ENCODE measurements at regions of chr2 and their contacts with region 1.

Region 1: GRCh38 chr2:16678964-16679363 is 13.3 kb upstream of the CYRIA start:
- DNase-seq: no peak
- H3K4me3 Mint-ChIP-seq: no peak overlapping the region
- H3K27ac Mint-ChIP-seq: no peak overlapping the region
- H3K4me1 Mint-ChIP-seq: no peaks in the 10 kb centered on the region
- H3K27me3 Mint-ChIP-seq: peaks cover 16% of the 10 kb centered on the region

Region 2: GRCh38 chr2:16693854-16694253 is 14.9 kb after region 1 on chr2:
- CTCF ChIA-PET with region 1: interaction called, 3 read pairs
- intact Hi-C with region 1: loop called (anchors 1 kb)
- DNase-seq: no peak
- H3K4me3 Mint-ChIP-seq: no peak overlapping the region
- H3K27ac Mint-ChIP-seq: no peak overlapping the region
- H3K4me1 Mint-ChIP-seq: no peaks in the 10 kb centered on the region
- H3K27me3 Mint-ChIP-seq: peaks cover 18% of the 10 kb centered on the region

Region 3: DNA sequence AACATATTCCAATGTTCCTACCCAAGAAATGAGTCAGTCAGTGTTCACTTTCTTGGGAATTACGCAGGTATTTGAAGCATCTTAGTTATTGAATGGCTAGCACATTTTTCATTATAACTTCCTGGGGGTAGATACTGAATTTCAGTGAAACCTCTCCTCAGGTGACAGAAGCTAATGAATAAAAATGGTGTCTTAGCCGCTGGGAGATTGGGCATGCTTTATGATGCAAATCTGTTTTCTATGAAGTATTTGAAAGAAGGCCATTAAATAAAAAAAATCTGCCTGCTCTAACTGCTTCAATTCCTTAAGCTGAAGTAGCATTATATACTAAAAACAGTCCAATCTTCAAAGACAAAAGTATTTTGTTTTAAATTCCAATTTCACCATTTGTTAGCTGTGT is 119.5 kb after region 1 on chr2:
- CTCF ChIA-PET with region 1: no interaction called
- intact Hi-C with region 1: no loop called
- DNase-seq: no peak
- H3K4me3 Mint-ChIP-seq: no peak overlapping the region
- H3K27ac Mint-ChIP-seq: no peak overlapping the region
- H3K4me1 Mint-ChIP-seq: no peaks in the 10 kb centered on the region
- H3K27me3 Mint-ChIP-seq: no peaks in the 10 kb centered on the region

Measured in activated naive CD4-positive, alpha-beta T cell treated with anti-CD3 and anti-CD28 coated beads for 36 hours (primary cell).